Activated B cell treated with CpG ODN at 0.5 μM for 24 hours (primary cell): ENCODE measurements at regions of chr5 and their contacts with region 1.

Region 1: GRCh38 chr5:37015795-37016666 is 139.5 kb downstream of the NIPBL start:
- DNase-seq: no peak
- ATAC-seq: no peak
- H3K4me3 Mint-ChIP-seq: no peak overlapping the region
- H3K27ac Mint-ChIP-seq: no peak overlapping the region
- H3K4me1 Mint-ChIP-seq: no peaks in the 10 kb centered on the region
- H3K27me3 Mint-ChIP-seq: no peaks in the 10 kb centered on the region
- CTCF ChIP-seq: no peak

Region 2: GRCh38 chr5:36982146-36982545 is 33.9 kb before region 1 on chr5:
- CTCF ChIA-PET with region 1: no interaction called
- POLR2A ChIA-PET with region 1: no interaction called
- intact Hi-C with region 1: loop called (anchors 5 kb)
- DNase-seq: no peak
- ATAC-seq: no peak
- H3K4me3 Mint-ChIP-seq: no peak overlapping the region
- H3K27ac Mint-ChIP-seq: no peak overlapping the region
- H3K4me1 Mint-ChIP-seq: peaks cover 12% of the 10 kb centered on the region
- H3K27me3 Mint-ChIP-seq: no peaks in the 10 kb centered on the region
- CTCF ChIP-seq: no peak

Region 3: GRCh38 chr5:37055383-37055990 is 39.5 kb after region 1 on chr5:
- CTCF ChIA-PET with region 1: no interaction called
- POLR2A ChIA-PET with region 1: no interaction called
- intact Hi-C with region 1: loop called (anchors 5 kb)
- DNase-seq: no peak
- ATAC-seq: no peak
- H3K4me3 Mint-ChIP-seq: no peak overlapping the region
- H3K27ac Mint-ChIP-seq: no peak overlapping the region
- H3K4me1 Mint-ChIP-seq: no peaks in the 10 kb centered on the region
- H3K27me3 Mint-ChIP-seq: no peaks in the 10 kb centered on the region
- CTCF ChIP-seq: no peak